ENCODE measurements at regions of chr5 and their contacts with region 1.

Region 1: DNA sequence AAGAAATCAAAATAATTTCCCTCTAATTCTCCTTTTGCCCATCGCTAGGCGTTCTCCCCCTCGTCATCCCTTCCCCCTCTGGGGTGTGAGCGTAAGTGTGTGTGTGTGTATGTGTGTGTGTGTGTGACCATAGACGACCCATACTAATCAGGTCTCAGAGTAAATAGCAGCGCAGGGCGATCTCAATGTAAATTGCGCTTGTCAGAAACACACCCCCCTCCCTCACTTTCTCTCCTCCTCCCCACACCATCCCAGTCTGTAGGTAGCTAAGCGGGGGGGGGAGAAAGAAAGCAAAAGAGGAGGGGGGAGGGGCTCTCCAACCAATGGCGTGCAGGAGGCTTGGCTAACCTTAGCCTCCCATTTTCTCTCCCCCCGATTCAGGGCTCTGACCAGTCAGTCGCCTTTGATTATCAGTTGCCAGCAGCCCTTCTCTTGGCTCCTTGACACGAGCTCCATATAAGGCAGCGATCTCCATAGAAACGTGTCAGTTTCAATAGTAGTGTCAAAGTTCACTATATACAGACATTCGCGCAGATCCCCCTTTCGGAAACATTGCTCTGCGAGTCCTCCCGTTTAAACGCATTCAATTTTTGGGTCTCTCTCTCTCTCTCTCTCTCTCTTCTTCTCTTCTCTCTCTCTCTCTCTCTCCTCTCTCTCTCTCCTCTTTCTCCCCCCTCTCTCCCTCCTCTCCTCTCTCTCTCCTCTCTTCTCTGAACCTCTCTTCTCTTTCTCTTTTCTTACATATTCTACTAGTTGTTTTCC is at the start of gene NR2F1:
- DNase-seq: peak; percentile 46 to 96
- H3K4me3 ChIP-seq: peak within 1 kb of the TSS; percentile 96
- H3K27ac ChIP-seq: peak within 1 kb of the TSS; percentile 79
- H3K4me1 ChIP-seq: peaks cover 17% of the 10 kb centered on the region
- H3K27me3 ChIP-seq: no peaks in the 10 kb centered on the region
- CTCF ChIP-seq: peak; percentile 79
- total RNA-seq, gene NR2F1: 1.1 and 1.3 TPM in 2 replicates

Region 2: DNA sequence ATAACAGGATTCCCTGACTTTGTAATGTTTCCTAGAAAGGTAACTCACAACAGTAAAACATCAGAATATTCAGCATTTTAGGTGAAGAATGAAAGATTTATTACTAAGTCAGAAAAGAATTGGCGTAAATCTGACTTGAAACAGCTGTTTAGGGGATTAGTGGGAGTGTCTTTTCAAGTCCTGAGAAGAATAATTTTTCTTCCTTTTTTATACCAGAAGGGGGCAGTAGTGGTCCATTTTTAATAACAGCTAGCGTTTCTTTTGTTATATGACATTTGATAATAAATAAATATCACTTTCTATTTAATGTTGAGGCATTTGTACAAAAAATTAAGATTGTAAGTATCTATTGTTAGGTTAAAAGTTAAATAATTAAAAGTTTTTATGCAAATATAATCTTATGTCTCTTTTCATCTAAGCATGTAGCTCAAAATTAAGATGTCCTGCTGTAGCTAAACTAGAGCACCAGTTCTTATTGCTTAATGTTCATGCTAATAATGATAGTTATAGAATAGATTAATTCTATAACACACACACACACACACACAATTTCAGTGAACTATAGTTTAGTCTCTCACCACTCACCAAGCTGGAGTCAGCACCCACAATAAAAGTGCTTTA is 1941.0 kb before region 1 on chr5:
- CTCF ChIA-PET with region 1: no interaction called
- POLR2A ChIA-PET with region 1: no interaction called
- intact Hi-C with region 1: loop called (anchors 10 kb)
- DNase-seq: peak in 1 of 2 experiments; percentile 45
- H3K4me3 ChIP-seq: no peak overlapping the region; the same call in 1 of the 2 replicates
- H3K27ac ChIP-seq: no peak overlapping the region
- H3K4me1 ChIP-seq: no peaks in the 10 kb centered on the region
- H3K27me3 ChIP-seq: no peaks in the 10 kb centered on the region
- CTCF ChIP-seq: peak; percentile 87

Region 3: GRCh38 chr5:93078082-93079038 is 504.5 kb before region 1 on chr5:
- CTCF ChIA-PET with region 1: no interaction called
- POLR2A ChIA-PET with region 1: no interaction called
- intact Hi-C with region 1: loop called (anchors 5 kb)
- DNase-seq: peak; percentile 81 to 99
- H3K4me3 ChIP-seq: peak overlapping the region; percentile 43; the same call in 1 of the 2 replicates
- H3K27ac ChIP-seq: peak overlapping the region; percentile 94
- H3K4me1 ChIP-seq: peaks cover 35% of the 10 kb centered on the region
- H3K27me3 ChIP-seq: no peaks in the 10 kb centered on the region
- CTCF ChIP-seq: no peak

Region 4: GRCh38 chr5:93359296-93359958 is 223.4 kb before region 1 on chr5:
- CTCF ChIA-PET with region 1: no interaction called
- POLR2A ChIA-PET with region 1: no interaction called
- intact Hi-C with region 1: loop called (anchors 10 kb)
- DNase-seq: peak; percentile 61 to 72
- H3K4me3 ChIP-seq: peak overlapping the region; percentile 10; the same call in 1 of the 2 replicates
- H3K27ac ChIP-seq: peak overlapping the region; percentile 66
- H3K4me1 ChIP-seq: peaks cover 17% of the 10 kb centered on the region
- H3K27me3 ChIP-seq: no peaks in the 10 kb centered on the region
- CTCF ChIP-seq: no peak

Region 5: GRCh38 chr5:93452255-93452654 is 130.6 kb before region 1 on chr5:
- CTCF ChIA-PET with region 1: no interaction called
- POLR2A ChIA-PET with region 1: no interaction called
- intact Hi-C with region 1: no loop called
- DNase-seq: no peak
- H3K4me3 ChIP-seq: no peak overlapping the region
- H3K27ac ChIP-seq: no peak overlapping the region
- H3K4me1 ChIP-seq: no peaks in the 10 kb centered on the region
- H3K27me3 ChIP-seq: no peaks in the 10 kb centered on the region
- CTCF ChIP-seq: no peak

Region 6: DNA sequence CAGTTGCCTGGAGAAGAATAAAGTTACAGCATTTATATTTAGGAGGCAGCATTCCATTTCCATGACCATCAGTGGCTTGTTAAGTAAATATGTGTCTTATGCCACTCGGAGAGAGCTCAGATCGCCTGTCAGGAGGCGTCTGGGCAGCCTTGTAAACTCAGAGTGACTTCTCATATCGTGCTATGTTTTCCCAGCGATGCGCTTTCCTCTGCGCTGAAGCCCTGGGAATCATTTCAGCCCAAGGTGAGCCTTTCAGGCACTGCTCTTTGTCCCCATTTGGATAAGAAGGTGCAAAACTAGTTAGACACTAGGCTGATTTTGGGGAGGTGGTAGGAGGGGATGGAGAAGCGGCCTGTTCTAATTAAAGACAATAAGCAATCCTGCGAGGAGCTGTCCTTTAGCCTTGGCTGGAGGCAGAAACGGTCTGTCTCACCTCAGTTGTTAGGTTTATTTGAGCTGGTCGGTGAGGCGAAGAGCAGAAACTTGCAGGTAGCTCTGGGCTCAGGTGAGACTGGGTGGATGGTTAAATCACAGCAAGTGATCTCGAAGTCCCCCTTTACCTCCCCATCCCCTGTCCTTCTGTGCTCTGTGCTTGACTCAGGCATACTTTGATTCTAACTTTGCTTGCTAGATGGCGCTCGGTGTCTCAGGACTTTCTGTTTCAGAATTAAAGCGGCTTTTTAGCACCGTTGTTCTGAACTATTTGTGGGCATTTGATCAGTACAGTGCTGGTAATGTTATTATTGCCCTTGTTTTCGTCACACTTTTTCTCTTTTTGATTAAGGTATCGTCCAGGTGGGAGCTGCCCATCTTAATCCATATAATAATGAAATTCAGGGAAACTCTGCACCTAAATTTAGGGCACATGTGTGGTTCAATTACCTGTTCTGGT is 24.8 kb after region 1 on chr5:
- CTCF ChIA-PET with region 1: interaction called, 10 read pairs
- POLR2A ChIA-PET with region 1: interaction called, 3 read pairs
- intact Hi-C with region 1: no loop called
- DNase-seq: peak; percentile 38 to 88
- H3K4me3 ChIP-seq: peak overlapping the region; percentile 47
- H3K27ac ChIP-seq: peak overlapping the region; percentile 60
- H3K4me1 ChIP-seq: peaks cover 21% of the 10 kb centered on the region
- H3K27me3 ChIP-seq: no peaks in the 10 kb centered on the region
- CTCF ChIP-seq: peak; percentile 58; the same call in 1 of the 2 replicates

Region 7: GRCh38 chr5:94693043-94693822 is 1110.4 kb after region 1 on chr5:
- CTCF ChIA-PET with region 1: no interaction called
- POLR2A ChIA-PET with region 1: no interaction called
- intact Hi-C with region 1: loop called (anchors 5 kb)
- DNase-seq: peak in 1 of 2 experiments; percentile 45
- H3K4me3 ChIP-seq: no peak overlapping the region
- H3K27ac ChIP-seq: no peak overlapping the region
- H3K4me1 ChIP-seq: no peaks in the 10 kb centered on the region
- H3K27me3 ChIP-seq: no peaks in the 10 kb centered on the region
- CTCF ChIP-seq: peak; percentile 64

Measured in PC-9 (cell line).